ENCODE measurements at regions of chr7 and their contacts with region 1.

Region 1: DNA sequence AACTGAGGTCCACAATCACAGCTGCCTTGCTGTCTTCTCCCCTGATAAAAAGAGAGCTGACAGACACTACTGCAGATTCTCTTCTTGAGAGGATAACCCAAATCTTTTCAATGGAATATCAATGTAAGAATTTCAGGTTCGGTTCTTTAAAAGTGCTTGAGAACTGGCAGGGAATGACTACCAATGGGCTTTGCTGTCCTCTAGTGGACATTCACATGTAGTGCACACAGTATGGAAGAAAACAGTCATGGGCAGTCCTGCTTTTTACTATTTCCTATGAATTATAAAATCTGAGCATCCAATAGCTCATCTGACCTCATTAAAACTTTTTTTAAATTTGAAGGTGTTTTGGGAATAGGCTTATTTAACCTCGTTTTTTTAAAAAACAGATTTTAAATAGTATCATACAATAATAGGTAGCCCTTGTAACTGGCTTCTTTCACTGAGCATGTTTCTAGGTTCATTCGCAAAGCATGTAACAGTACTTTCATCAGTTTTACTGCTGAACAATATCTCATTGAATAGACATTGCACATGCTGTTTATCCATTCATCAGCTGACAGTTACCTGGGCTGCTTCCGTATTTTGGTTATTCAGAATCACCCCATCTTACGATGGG is 18.3 kb downstream of the FZD9 start:
- H3K4me3 ChIP-seq: no peak overlapping the region
- H3K27ac ChIP-seq: no peak overlapping the region
- H3K4me1 ChIP-seq: no peaks in the 10 kb centered on the region
- CTCF ChIP-seq: peak; percentile 22; the same call in 1 of the 2 replicates

Region 2: GRCh38 chr7:73329861-73330581 is 121.9 kb before region 1 on chr7:
- CTCF ChIA-PET with region 1: interaction called, 19 read pairs
- POLR2A ChIA-PET with region 1: no interaction called
- H3K4me3 ChIP-seq: no peak overlapping the region
- H3K27ac ChIP-seq: no peak overlapping the region
- H3K4me1 ChIP-seq: no peaks in the 10 kb centered on the region
- CTCF ChIP-seq: no peak

Region 3: DNA sequence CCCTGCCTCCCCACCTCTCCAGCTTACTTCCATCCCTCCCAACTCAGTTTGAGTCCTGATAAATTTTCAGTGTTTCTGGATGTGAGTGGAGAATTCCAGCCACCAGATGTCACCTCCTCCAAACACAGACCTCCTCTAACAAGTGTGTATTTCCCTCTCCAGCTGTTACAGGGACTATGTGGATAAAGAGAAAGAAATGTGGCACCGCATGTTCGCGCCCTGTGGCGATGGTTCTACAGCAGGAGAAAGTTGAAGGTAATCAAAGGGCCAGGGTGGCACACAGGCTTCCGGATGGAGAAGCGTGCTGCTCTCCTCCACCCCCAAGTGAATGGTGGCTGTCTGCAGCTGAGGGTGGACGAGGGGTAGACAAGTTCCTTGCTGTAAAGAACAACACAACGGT is 109.2 kb before region 1 on chr7:
- CTCF ChIA-PET with region 1: interaction called, 19 read pairs
- POLR2A ChIA-PET with region 1: no interaction called
- H3K4me3 ChIP-seq: no peak overlapping the region
- H3K27ac ChIP-seq: no peak overlapping the region
- H3K4me1 ChIP-seq: no peaks in the 10 kb centered on the region
- CTCF ChIP-seq: 0 out of 2 replicates have a peak, but pooled peaks have one; percentile 23

Region 4: DNA sequence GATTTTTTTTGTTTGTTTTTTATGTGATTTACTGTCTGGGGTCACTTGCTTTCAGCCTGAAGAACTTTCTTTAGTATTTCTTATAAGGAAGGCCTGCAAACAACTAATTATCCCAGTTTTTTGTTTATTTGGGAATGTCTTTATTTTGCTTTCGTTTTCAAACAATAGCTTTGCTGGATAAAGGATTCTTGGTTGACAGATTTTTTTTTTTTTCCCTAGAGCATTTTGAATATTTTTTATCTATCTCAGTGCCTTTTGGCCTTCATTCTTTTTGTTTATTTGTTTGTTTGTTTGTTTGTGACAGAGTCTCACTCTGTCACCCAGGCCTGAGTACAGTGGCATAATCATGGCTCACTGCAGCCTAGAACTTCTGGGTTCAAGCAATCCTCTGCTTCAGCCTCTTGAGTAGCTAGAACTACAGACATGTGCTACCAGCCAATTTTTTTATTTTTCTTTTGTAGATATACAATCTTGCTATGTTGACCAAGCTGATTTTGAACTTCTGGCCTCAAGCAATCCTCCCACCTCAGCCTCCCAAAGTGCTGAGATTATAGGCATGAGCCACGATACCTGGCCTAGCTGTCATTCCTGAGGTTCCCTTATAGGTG is 64.6 kb before region 1 on chr7:
- CTCF ChIA-PET with region 1: no interaction called
- POLR2A ChIA-PET with region 1: no interaction called
- H3K4me3 ChIP-seq: no peak overlapping the region
- H3K27ac ChIP-seq: no peak overlapping the region
- H3K4me1 ChIP-seq: no peaks in the 10 kb centered on the region
- CTCF ChIP-seq: no peak

Region 5: GRCh38 chr7:73436031-73436828 is 15.7 kb before region 1 on chr7:
- CTCF ChIA-PET with region 1: interaction called, 40 read pairs
- POLR2A ChIA-PET with region 1: no interaction called
- H3K4me3 ChIP-seq: no peak overlapping the region
- H3K27ac ChIP-seq: no peak overlapping the region
- H3K4me1 ChIP-seq: peaks cover 7% of the 10 kb centered on the region; the same call in 1 of the 2 replicates
- CTCF ChIP-seq: no peak

Region 6: DNA sequence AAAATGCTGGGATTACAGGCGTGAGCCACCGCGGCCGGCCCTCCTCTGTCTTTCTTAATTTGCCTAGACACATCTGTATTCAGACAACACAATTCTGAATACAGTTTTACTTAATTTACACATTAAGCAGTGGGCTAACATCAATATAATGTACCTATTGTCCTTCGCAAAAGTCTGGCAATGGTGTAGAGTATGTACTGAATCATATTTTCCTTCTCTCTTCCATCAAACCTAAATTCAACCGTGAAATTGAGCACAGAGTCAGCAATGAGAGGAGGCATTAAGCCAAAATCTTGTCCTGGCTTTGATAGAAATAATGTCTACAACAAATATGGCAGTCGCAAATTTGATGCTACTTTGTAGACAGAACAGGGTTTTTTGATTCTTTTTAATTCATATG is 12.1 kb after region 1 on chr7:
- CTCF ChIA-PET with region 1: interaction called, 18 read pairs
- POLR2A ChIA-PET with region 1: no interaction called
- H3K4me3 ChIP-seq: no peak overlapping the region
- H3K27ac ChIP-seq: no peak overlapping the region
- H3K4me1 ChIP-seq: no peaks in the 10 kb centered on the region
- CTCF ChIP-seq: no peak

Region 7: DNA sequence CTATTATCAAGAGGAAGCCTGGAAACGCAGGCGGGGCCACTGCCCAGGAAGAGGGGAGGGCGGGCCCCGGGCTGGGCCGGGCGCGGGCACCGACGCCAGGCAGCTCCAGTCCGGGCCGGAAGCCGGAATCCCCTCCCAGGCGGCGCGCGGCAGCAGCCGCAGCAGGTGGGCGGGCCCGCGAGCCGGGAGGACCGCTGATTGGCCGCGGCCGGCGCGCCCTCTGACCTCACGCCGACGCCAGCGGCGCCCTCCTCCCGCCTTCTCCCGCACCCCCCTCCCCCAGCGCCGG is 105.2 kb after region 1 on chr7:
- CTCF ChIA-PET with region 1: no interaction called
- POLR2A ChIA-PET with region 1: no interaction called
- H3K4me3 ChIP-seq: peak overlapping the region; percentile 94
- H3K27ac ChIP-seq: peak overlapping the region; percentile 96
- H3K4me1 ChIP-seq: peaks cover 3% of the 10 kb centered on the region; the same call in 1 of the 2 replicates
- CTCF ChIP-seq: no peak